ENCODE measurements at regions of chr5 and their contacts with region 1.

Region 1: DNA sequence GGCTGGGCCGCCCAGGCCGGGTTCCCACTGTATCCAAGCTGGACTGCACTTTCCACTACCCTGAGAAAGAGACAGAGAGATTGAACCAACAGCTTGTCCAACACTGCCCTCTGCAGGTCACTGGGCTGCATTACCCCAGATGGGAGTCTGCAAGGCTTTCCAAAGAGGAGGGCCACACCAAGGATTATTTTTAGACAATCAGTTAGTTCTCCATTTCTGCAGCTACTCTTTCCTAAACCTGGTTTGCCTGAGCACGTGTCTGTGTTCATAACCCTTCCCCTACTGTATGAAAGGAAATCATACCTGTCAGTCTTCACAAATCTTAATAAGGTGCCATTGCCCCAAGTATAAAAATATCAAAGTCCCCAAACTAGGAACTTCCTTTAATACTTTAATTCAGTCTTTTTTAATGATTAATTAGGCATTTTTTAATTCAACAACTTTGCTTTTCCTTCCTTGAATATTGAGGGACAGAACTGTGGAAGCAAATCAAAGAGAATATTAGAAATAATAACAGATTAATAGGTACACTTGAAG is 13.4 kb upstream of the FGF1 start:
- DNase-seq: peak; percentile 65 to 78
- ATAC-seq: peak; percentile 94

Region 2: DNA sequence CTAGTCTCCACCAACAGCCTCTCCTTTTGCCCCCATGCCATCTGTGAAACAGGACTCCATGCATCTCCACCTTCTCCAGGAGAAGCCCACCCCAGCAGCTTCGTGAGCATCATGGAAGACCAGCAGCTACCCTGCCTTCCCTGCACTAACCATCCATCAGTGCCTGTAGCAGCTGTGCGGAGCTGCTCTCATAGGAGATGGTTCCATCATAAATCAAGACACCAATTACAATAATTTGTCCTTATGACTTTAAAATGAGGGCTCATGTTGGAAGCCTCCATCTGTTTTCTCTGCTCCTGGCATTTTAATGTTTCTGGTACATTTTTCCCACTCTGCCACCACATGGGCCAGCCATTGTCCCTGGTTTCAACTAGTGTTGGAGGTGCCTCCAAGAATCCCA is 83.3 kb before region 1 on chr5:
- intact Hi-C with region 1: loop called in 1 of 2 experiments (anchors 2 kb)
- DNase-seq: no peak
- ATAC-seq: no peak

Region 3: DNA sequence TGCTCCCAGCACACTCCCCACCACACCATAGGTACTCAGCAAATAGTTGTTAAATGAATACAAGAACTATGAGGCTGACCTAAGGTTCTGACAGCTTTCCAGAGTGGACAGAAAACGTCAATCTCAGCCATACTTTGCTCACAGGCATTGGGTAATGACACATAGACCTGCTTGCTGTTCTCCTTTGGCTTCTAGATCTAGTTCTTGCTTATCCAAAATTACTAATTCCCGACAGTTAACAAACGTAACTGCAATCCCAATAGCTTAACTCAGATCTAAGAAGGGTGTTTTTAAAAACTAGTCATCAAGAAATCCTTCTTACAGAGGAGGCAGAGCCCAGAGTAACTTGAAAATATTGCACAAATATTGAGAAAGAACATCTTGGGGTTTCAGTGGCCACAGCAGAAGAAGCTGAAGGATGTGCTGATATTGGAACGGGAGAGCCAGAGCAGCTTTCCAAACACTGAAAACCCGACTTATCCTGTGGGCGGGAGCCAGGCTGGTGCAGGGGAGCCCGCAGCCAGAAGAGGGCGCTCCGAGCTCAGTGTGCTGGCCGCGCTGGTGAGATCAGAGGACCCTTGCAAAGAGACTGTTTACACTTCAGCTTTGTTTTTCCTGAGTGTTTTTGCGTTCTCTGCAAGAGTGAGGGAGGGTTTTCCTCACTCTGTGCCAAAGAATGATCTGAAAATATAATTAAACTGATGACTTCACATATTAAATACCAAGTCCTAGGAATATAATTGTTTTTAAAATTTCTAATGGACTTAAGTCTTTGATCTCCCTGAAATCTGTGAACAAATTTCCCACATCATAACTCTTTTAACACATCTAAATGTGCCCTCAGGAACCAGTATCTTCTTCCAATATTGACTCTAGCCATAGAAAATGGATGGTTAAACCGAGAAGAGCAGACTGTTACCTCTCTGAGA is 43.6 kb before region 1 on chr5:
- intact Hi-C with region 1: loop called in 1 of 2 experiments (anchors 1 kb)
- DNase-seq: peak; percentile 43 to 79
- ATAC-seq: peak; percentile 86

Region 4: DNA sequence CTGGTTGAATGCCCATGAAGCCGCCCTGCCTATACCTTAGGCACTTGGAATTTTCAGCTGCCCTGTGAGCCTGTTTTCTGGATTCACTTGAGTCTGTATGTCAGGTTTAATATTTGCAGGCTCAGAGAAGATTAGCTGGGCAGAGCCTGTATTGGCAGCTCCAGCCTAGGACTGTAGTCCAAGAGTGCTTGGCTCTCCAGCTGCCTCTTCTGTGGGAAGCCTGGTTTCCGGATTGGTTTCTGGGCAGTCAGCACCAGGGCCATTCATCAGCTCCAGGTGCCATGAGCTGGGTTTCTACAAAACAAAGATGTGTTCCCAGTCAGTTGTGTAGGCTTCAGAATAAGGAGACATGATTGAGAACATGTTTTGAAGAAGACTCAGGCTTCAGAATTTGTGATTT is 161.0 kb after region 1 on chr5:
- intact Hi-C with region 1: no loop called
- DNase-seq: no peak
- ATAC-seq: no peak